A673 (cell line): ENCODE measurements at regions of chr11 and their contacts with region 1.

Region 1: GRCh38 chr11:126969865-126970479 is 30.6 kb downstream of the KIRREL3 start:
- DNase-seq: peak; percentile 25
- H3K4me3 ChIP-seq: no peak overlapping the region
- H3K27ac ChIP-seq: no peak overlapping the region
- H3K4me1 ChIP-seq: no peaks in the 10 kb centered on the region
- H3K27me3 ChIP-seq: peaks cover 48% of the 10 kb centered on the region
- CTCF ChIP-seq: peak; percentile 59

Region 2: GRCh38 chr11:127395034-127395433 is 425.1 kb after region 1 on chr11:
- CTCF ChIA-PET with region 1: no interaction called
- POLR2A ChIA-PET with region 1: interaction called, 28 read pairs
- intact Hi-C with region 1: no loop called
- DNase-seq: no peak
- H3K4me3 ChIP-seq: no peak overlapping the region
- H3K27ac ChIP-seq: no peak overlapping the region
- H3K4me1 ChIP-seq: no peaks in the 10 kb centered on the region
- H3K27me3 ChIP-seq: peaks cover 11% of the 10 kb centered on the region
- CTCF ChIP-seq: no peak